ENCODE measurements at regions of chr6 and their contacts with region 1.

Region 1: GRCh38 chr6:108541838-108542759 is 18.6 kb upstream of the FOXO3 start:
- DNase-seq: peak; percentile 67
- H3K4me3 ChIP-seq: no peak overlapping the region
- H3K27ac ChIP-seq: no peak overlapping the region
- H3K4me1 ChIP-seq: no peaks in the 10 kb centered on the region
- H3K27me3 ChIP-seq: no peaks in the 10 kb centered on the region
- CTCF ChIP-seq: peak; percentile 76 to 85

Region 2: GRCh38 chr6:108764580-108764950 is 222.5 kb after region 1 on chr6:
- CTCF ChIA-PET with region 1: no interaction called
- dilution Hi-C with region 1: no loop called
- in situ Hi-C with region 1: no loop called
- intact Hi-C with region 1: no loop called
- DNase-seq: no peak
- H3K4me3 ChIP-seq: no peak overlapping the region
- H3K27ac ChIP-seq: no peak overlapping the region
- H3K4me1 ChIP-seq: no peaks in the 10 kb centered on the region
- H3K27me3 ChIP-seq: no peaks in the 10 kb centered on the region
- CTCF ChIP-seq: no peak

Region 3: GRCh38 chr6:108835218-108835850 is 293.2 kb after region 1 on chr6:
- CTCF ChIA-PET with region 1: no interaction called
- dilution Hi-C with region 1: no loop called
- in situ Hi-C with region 1: loop called (anchors 5 kb)
- intact Hi-C with region 1: loop called (anchors 1 kb)
- DNase-seq: peak; percentile 42
- H3K4me3 ChIP-seq: no peak overlapping the region
- H3K27ac ChIP-seq: no peak overlapping the region
- H3K4me1 ChIP-seq: peaks cover 20% of the 10 kb centered on the region
- H3K27me3 ChIP-seq: no peaks in the 10 kb centered on the region
- CTCF ChIP-seq: peak; percentile 82 to 91

Region 4: DNA sequence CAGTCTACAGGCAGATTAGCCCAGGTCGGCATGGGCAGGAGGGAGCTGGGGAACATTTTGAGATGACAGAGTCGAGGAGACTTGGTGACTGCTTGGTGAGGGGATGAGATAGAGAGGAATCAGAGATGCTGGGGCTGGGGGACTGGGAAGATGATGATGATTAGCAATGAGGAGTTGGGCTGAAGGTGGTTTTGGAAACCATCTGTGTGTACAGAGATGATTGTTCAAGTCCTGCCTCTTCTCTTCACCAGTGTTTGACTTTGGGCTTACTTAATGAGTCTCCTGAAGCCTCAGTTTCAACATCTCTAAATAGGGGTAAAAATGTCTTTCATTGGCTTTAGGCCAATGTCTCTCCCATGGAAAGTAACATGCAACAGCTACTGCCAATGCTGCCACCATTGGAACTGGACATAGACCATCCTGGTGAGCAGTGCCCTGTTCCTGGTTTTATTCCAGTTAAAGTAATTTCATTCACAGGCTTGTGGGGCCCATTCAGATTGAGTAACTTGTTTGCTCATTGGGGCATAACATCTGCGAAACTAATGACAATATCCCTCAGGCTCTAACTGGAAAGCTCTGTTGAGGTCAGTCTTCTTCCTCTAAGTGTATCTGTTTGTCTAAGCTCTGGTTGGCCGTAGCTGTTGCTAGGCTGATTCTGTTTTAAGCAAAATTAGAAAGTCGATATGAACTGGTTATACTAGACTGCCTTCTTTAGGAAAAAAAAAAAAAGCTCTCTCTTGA is 405.2 kb after region 1 on chr6:
- CTCF ChIA-PET with region 1: no interaction called
- dilution Hi-C with region 1: no loop called
- in situ Hi-C with region 1: no loop called
- intact Hi-C with region 1: no loop called
- DNase-seq: peak; percentile 97
- H3K4me3 ChIP-seq: no peak overlapping the region
- H3K27ac ChIP-seq: peak overlapping the region; percentile 56
- H3K4me1 ChIP-seq: peaks cover 39% of the 10 kb centered on the region
- H3K27me3 ChIP-seq: no peaks in the 10 kb centered on the region
- CTCF ChIP-seq: no peak

Region 5: DNA sequence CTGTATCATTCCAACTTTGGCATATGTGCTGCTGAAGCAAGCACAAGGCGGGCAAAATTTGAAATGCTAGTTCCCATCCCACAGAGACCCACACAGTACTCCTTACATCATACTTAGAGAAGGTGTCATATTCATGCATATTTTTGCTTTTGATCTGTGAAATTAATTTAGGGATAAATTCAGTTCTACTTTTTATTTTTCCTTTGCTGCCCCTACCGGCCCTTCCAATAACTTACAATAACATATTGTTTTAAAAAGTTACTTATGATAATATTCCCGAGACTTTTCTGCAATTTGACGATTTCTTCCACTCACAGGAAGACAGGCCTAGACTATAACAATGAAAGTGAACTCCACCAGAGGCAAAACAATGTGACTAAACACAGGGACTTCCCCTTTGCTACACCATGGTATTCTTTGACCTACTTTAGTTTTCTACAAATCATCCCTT is 517.5 kb after region 1 on chr6:
- CTCF ChIA-PET with region 1: no interaction called
- dilution Hi-C with region 1: loop called (anchors 25 kb)
- in situ Hi-C with region 1: loop called in 1 of 2 experiments (anchors 10 kb)
- intact Hi-C with region 1: no loop called
- DNase-seq: peak; percentile 48
- H3K4me3 ChIP-seq: no peak overlapping the region
- H3K27ac ChIP-seq: no peak overlapping the region
- H3K4me1 ChIP-seq: peaks cover 12% of the 10 kb centered on the region
- H3K27me3 ChIP-seq: no peaks in the 10 kb centered on the region
- CTCF ChIP-seq: peak; percentile 30 to 35

Region 6: GRCh38 chr6:109187399-109188114 is 645.5 kb after region 1 on chr6:
- CTCF ChIA-PET with region 1: no interaction called
- dilution Hi-C with region 1: no loop called
- in situ Hi-C with region 1: no loop called
- intact Hi-C with region 1: loop called (anchors 2 kb)
- DNase-seq: peak; percentile 16
- H3K4me3 ChIP-seq: no peak overlapping the region
- H3K27ac ChIP-seq: no peak overlapping the region
- H3K4me1 ChIP-seq: no peaks in the 10 kb centered on the region
- H3K27me3 ChIP-seq: peaks cover 2% of the 10 kb centered on the region
- CTCF ChIP-seq: peak; percentile 88 to 98

Measured in mammary epithelial cell (primary cell).